ENCODE measurements at regions of chr14 and their contacts with region 1.

Region 1: DNA sequence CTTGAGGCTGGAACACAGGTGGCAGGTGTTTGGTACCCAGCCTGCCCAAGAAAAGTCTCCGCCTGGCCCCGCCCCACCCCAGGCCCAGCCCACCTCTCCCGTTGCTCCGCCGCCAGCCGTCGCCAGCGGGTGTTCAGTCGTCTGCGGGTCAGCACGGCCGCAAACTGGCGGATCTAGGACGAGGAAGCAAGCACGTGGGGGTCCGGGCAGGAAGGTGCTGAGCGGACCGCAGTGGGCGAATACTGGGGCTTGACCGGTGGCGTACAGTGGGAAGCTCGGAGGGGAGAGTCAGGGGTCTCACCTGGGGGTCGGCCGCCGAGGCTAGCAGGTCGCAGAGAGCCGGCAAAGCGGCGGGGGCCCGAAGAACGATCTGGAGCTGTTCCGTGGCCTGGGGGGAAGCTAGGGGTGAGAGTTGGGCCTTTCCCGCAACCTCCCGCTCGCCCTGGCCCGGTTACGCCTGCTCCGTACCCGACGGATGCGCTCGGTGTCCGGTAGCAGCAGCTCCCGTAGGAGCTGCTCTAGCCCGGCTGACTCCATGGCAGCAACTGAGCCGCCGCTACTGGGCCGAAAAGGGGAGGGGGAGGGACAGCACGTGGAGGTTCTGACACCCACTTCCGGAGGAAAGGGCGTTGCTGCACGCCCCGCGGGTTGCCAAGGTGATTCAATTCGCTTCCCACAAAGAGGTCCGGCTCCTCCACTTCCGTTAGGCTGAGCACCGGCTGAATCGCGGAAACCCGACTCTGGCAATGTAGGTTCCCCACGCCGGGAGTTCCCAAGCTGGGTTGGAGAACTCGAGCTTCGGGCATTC is at the start of gene IPO4:
- DNase-seq: peak; percentile 96
- ATAC-seq: peak; percentile 93
- H3K4me3 ChIP-seq: peak within 1 kb of the TSS; percentile 32 to 79 (median 70)
- H3K4me3 Mint-ChIP-seq: peak within 1 kb of the TSS; percentile 93
- H3K27ac ChIP-seq: peak within 1 kb of the TSS; percentile 63 to 86
- H3K27ac Mint-ChIP-seq: peak within 1 kb of the TSS; percentile 87
- H3K4me1 ChIP-seq: peaks cover 14 to 17% of the 10 kb centered on the region in 2 donors
- H3K4me1 Mint-ChIP-seq: peaks cover 35% of the 10 kb centered on the region
- H3K27me3 ChIP-seq: no peaks in the 10 kb centered on the region
- H3K27me3 Mint-ChIP-seq: no peaks in the 10 kb centered on the region
- CTCF ChIP-seq: no peak
- total RNA-seq, gene IPO4: 29.8 and 35.0 TPM in 2 replicates

Region 2: GRCh38 chr14:23793532-23793931 is 394.9 kb before region 1 on chr14:
- CTCF ChIA-PET with region 1: no interaction called
- POLR2A ChIA-PET with region 1: no interaction called
- intact Hi-C with region 1: no loop called
- DNase-seq: no peak
- ATAC-seq: no peak
- H3K4me3 ChIP-seq: no peak overlapping the region
- H3K4me3 Mint-ChIP-seq: no peak overlapping the region
- H3K27ac ChIP-seq: no peak overlapping the region
- H3K27ac Mint-ChIP-seq: no peak overlapping the region
- H3K4me1 ChIP-seq: no peaks in the 10 kb centered on the region
- H3K4me1 Mint-ChIP-seq: no peaks in the 10 kb centered on the region
- H3K27me3 ChIP-seq: peaks cover 0 to 4% (median 1%) of the 10 kb centered on the region in 4 experiments
- H3K27me3 Mint-ChIP-seq: peaks cover 25% of the 10 kb centered on the region
- CTCF ChIP-seq: no peak

Region 3: DNA sequence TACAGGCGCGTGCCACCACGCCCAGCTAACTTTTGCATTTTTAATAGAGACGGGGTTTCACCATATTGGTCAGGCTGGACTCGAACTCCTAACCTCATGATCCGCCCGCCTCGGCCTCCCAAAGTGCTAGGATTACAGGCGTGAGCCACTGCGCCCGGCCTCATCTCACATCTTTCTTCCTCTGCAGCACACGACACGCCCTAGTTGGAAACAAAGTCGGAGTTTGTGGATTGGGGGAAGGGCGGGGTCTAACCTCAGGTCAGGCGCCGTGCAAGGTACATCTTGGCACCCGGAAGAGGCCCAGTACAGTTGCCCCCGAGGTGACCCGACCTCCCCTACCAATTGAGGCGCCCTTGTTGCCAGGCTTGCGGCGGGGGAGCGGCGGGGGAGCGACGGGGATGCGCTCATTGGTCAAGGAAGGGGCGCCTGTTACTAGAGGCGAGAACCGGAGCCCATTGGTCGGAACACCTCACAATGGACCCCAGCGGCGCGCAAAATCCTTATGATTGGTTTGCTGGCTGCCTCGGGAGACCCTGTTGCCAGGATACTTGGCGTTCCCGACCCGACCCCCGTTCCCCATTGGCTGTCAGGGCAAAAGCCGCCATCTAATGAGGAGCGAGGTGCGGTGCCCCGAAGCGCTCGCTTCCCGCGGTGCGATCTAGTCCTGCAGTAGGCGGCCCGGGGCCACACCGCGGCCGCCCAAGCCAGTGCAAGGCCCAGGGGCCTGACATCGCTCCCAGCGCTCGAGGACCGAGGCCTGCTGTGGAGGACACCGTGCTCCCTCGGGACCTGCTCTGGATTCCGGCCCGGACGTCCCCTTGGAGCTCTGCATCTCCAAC is 16.8 kb before region 1 on chr14 and contains the start of gene REC8:
- CTCF ChIA-PET with region 1: interaction called, 3 read pairs
- POLR2A ChIA-PET with region 1: interaction called, 4 read pairs
- intact Hi-C with region 1: loop called (anchors 1 kb)
- DNase-seq: peak; percentile 89
- ATAC-seq: peak; percentile 92
- H3K4me3 ChIP-seq: peak within 1 kb of the TSS; percentile 47 to 72 (median 60)
- H3K4me3 Mint-ChIP-seq: peak within 1 kb of the TSS; percentile 93
- H3K27ac ChIP-seq: no peak within 1 kb of the TSS
- H3K27ac Mint-ChIP-seq: peak within 1 kb of the TSS; percentile 79
- H3K4me1 ChIP-seq: peaks cover 11 to 23% of the 10 kb centered on the region in 2 donors
- H3K4me1 Mint-ChIP-seq: peaks cover 20% of the 10 kb centered on the region
- H3K27me3 ChIP-seq: no peaks in the 10 kb centered on the region
- H3K27me3 Mint-ChIP-seq: no peaks in the 10 kb centered on the region
- CTCF ChIP-seq: no peak
- total RNA-seq, gene REC8: 48.4 and 62.1 TPM in 2 replicates

Measured in B cell (primary cell).